ENCODE measurements at regions of chr5 and their contacts with region 1.

Region 1: DNA sequence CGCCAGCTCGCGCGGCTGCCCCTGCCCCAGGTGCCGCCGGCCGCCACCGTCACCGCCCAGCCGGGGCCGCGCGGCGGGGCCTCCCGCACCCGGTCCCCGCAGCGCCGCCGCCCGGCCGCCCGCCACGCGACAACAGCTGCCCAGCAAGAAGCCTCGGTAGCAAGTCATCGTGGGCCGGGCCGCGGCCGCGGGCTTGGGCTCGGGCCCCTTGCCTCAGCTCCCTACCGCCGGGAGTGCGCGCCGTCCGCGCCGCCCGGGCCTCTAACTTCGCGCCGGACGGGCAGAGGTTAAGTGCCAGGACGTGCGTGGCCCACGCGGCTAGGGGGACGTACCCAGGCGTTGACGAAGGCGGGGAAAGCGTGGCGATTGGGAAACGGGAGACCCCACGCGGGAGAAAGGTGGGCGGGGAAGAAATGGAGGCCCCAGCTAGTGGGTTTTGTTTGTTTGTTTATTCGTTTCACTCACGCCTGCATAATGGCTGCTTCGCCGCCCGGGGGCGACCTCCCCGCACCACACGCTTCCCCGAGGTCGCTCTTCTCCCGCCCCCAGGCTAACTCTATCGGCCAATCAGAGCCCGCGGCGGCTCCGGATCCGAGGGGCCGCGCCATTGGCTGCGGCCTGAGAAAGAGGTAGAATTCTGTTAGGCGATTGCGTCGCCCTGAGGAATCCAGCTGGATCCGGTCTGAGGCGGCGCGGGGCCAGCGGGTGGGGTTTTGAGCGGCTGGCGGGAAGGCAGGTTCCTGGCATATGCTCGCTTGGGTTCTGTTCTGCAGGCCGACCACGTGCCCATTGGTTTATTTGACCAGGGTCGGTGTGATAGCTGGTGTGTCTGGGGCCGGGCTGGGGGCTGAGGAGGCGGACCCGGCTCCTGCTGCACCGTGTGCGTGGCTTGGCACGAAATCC is at the start of gene NADK2:
- DNase-seq: peak; percentile 95
- H3K4me3 ChIP-seq: peak within 1 kb of the TSS; percentile 77 to 81
- H3K27ac ChIP-seq: peak within 1 kb of the TSS; percentile 96 to 98
- H3K4me1 ChIP-seq: peaks cover 6% of the 10 kb centered on the region
- H3K27me3 ChIP-seq: no peaks in the 10 kb centered on the region
- CTCF ChIP-seq: peak in 3 of 4 experiments; percentile 69 to 85 (median 78)
- POLR2A ChIP-seq: peak; percentile 89
- total RNA-seq, gene NADK2: 21.6 to 37.9 TPM

Region 2: DNA sequence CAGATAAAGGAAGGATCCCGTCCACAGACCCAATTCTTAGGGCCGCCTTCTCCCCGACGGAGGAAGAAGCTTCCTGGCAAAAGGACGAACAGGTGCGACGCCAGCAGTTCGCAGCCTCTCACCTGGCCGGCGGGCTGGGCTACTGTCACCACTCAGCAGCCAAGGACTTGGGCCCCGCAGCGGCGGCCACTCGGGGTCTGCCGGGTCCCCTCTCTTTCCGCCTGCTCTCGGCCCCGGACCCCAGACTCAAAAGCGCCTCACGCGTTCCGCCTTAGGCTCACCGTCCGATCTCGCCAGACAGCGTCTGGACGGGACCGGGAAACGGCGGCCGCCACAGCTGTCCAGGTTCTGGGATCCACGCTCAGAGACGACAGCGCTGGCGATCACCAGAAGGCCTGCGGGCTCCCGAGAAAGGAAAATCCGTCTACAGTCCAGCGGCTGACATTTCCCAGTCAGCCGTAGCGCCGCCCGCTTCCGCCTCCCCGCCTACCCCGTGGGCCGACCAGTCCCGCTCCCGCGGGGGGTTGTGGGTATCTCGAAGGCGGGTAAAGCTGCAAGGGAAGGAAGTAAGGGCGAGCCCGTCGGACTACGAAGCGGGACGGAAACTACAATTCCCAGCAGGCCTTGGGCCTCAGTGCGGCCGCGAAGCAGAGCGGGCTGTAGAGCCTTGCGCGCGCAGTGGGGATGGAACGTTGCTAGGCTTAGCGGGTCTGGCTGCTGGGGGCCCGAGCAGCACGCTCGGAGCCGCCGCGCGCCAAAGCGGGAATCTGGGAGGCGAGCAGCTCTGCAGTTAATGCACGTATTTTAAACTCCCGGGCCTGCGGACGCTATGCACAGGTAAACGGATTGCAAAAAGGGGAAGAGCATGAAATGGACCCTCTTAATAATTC is 90.2 kb before region 1 on chr5 and contains the starts of genes LMBRD2 and SKP2:
- intact Hi-C with region 1: loop called (anchors 5 kb)
- DNase-seq: peak; percentile 98
- H3K4me3 ChIP-seq: peak within 1 kb of the TSS; percentile 71 to 88
- H3K27ac ChIP-seq: peak within 1 kb of the TSS; percentile 72 to 80
- H3K4me1 ChIP-seq: peaks cover 4% of the 10 kb centered on the region
- H3K27me3 ChIP-seq: no peaks in the 10 kb centered on the region
- CTCF ChIP-seq: peak in 2 of 4 experiments; percentile 5 to 42
- POLR2A ChIP-seq: peak; percentile 45
- total RNA-seq, gene LMBRD2: 7.4 to 15.7 TPM
- total RNA-seq, gene SKP2: 7.8 to 9.3 TPM

Region 3: GRCh38 chr5:36397901-36398536 is 156.1 kb after region 1 on chr5:
- intact Hi-C with region 1: loop called (anchors 5 kb)
- DNase-seq: no peak
- H3K4me3 ChIP-seq: no peak overlapping the region
- H3K27ac ChIP-seq: peak overlapping the region in 1 of 2 donors; percentile 9
- H3K4me1 ChIP-seq: no peaks in the 10 kb centered on the region
- H3K27me3 ChIP-seq: no peaks in the 10 kb centered on the region
- CTCF ChIP-seq: peak in 3 of 4 experiments; percentile 25 to 57 (median 41)
- POLR2A ChIP-seq: no peak

Region 4: DNA sequence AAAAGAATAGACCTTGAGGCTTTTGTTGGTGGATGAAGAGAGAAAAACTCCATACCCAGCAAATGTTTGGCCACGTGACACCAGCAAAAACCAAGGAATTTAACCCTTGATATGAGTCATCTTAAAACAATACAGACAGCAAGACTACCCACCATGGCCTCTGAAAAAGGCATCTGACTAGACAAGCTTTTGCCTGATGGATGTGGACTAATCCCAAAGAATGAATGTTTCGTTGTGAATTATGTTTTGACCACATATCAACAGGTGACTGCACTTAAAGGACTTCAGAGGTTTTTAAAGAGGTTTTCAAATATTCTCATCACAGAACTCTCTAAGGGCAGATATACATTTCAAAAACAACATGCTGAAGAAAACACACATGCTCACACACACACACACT is 331.6 kb after region 1 on chr5:
- intact Hi-C with region 1: no loop called
- DNase-seq: no peak
- H3K4me3 ChIP-seq: no peak overlapping the region
- H3K27ac ChIP-seq: no peak overlapping the region
- H3K4me1 ChIP-seq: no peaks in the 10 kb centered on the region
- H3K27me3 ChIP-seq: no peaks in the 10 kb centered on the region
- CTCF ChIP-seq: no peak
- POLR2A ChIP-seq: no peak